Activated B cell treated with CpG ODN at 0.5 μM for 24 hours (primary cell): ENCODE measurements at regions of chr15 and their contacts with region 1.

Region 1: GRCh38 chr15:67134067-67134838 is 68.9 kb downstream of the SMAD3 start:
- DNase-seq: no peak
- ATAC-seq: peak; percentile 90
- H3K4me3 Mint-ChIP-seq: peak overlapping the region; percentile 78
- H3K27ac Mint-ChIP-seq: peak overlapping the region; percentile 94
- H3K4me1 Mint-ChIP-seq: peaks cover 94% of the 10 kb centered on the region
- H3K27me3 Mint-ChIP-seq: no peaks in the 10 kb centered on the region
- CTCF ChIP-seq: no peak

Region 2: DNA sequence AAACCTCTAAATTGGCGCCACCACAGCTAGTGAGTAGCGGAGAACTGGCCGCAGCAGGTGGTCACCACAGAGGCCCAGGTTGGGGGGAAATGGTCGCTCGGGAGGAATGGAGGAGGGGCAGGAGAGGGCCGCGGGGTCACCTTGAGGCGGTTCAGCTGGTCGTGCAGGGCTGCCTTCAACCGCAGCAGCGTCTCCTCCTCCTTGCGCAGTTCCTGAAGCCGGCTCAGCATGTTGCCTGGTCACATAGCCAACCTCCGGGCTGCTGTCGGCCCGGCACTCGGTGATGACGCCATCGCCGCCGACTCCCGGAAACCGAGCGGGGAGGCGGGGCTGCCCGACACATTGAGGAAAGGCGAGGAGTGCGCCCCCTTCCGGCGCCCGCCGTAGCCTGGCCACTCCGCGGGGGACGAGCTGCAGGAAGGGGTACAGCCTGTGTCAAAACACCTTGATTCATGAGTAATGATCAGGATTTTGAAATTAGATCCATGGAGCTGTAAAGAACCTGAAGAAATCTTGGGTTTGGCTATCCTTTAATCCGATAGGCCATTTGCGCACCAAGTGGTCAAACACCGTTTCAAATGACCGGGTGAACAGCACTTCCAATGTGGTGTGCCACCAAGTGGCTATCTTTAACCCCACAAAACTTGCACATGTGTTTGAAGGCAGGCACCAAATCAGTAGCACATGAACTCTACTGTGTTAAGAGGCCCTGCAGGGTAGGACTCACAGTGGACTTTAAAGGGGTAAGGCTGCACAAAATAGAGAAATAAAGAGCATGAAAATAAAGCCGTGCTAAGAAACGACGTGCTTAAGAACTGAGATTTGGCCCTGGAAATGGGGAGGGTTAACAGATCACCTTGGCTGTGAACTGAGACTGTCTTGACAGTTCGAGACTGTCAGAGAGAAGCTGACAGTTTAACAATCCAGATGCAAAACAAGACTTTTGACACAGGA is 636.5 kb before region 1 on chr15 and contains the start of gene SNAPC5:
- CTCF ChIA-PET with region 1: no interaction called
- POLR2A ChIA-PET with region 1: no interaction called
- intact Hi-C with region 1: no loop called
- DNase-seq: peak; percentile 97
- ATAC-seq: peak; percentile 94
- H3K4me3 Mint-ChIP-seq: peak within 1 kb of the TSS; percentile 94
- H3K27ac Mint-ChIP-seq: peak within 1 kb of the TSS; percentile 93
- H3K4me1 Mint-ChIP-seq: peaks cover 44% of the 10 kb centered on the region
- H3K27me3 Mint-ChIP-seq: no peaks in the 10 kb centered on the region
- CTCF ChIP-seq: peak; percentile 79
- total RNA-seq, gene SNAPC5: 28.5 and 30.6 TPM in 2 replicates

Region 3: GRCh38 chr15:66940368-66940767 is 193.9 kb before region 1 on chr15:
- CTCF ChIA-PET with region 1: no interaction called
- POLR2A ChIA-PET with region 1: no interaction called
- intact Hi-C with region 1: no loop called
- DNase-seq: no peak
- ATAC-seq: peak; percentile 57
- H3K4me3 Mint-ChIP-seq: no peak overlapping the region
- H3K27ac Mint-ChIP-seq: no peak overlapping the region
- H3K4me1 Mint-ChIP-seq: no peaks in the 10 kb centered on the region
- H3K27me3 Mint-ChIP-seq: no peaks in the 10 kb centered on the region
- CTCF ChIP-seq: no peak

Region 4: GRCh38 chr15:67085818-67086636 is 48.2 kb before region 1 on chr15:
- CTCF ChIA-PET with region 1: interaction called, 8 read pairs
- POLR2A ChIA-PET with region 1: interaction called, 7 read pairs
- intact Hi-C with region 1: loop called (anchors 1 kb)
- DNase-seq: no peak
- ATAC-seq: peak; percentile 51
- H3K4me3 Mint-ChIP-seq: peak overlapping the region; percentile 59
- H3K27ac Mint-ChIP-seq: peak overlapping the region; percentile 95
- H3K4me1 Mint-ChIP-seq: peaks cover 100% of the 10 kb centered on the region
- H3K27me3 Mint-ChIP-seq: no peaks in the 10 kb centered on the region
- CTCF ChIP-seq: no peak

Region 5: GRCh38 chr15:67091071-67091979 is 42.9 kb before region 1 on chr15:
- CTCF ChIA-PET with region 1: no interaction called
- POLR2A ChIA-PET with region 1: interaction called, 6 read pairs
- intact Hi-C with region 1: loop called (anchors 1 kb)
- DNase-seq: no peak
- ATAC-seq: peak; percentile 46
- H3K4me3 Mint-ChIP-seq: peak overlapping the region; percentile 74
- H3K27ac Mint-ChIP-seq: peak overlapping the region; percentile 95
- H3K4me1 Mint-ChIP-seq: peaks cover 100% of the 10 kb centered on the region
- H3K27me3 Mint-ChIP-seq: no peaks in the 10 kb centered on the region
- CTCF ChIP-seq: no peak

Region 6: GRCh38 chr15:67109141-67110034 is 24.9 kb before region 1 on chr15:
- CTCF ChIA-PET with region 1: no interaction called
- POLR2A ChIA-PET with region 1: interaction called, 10 read pairs
- intact Hi-C with region 1: no loop called
- DNase-seq: peak; percentile 76
- ATAC-seq: peak; percentile 83
- H3K4me3 Mint-ChIP-seq: peak overlapping the region; percentile 67
- H3K27ac Mint-ChIP-seq: peak overlapping the region; percentile 92
- H3K4me1 Mint-ChIP-seq: peaks cover 14% of the 10 kb centered on the region
- H3K27me3 Mint-ChIP-seq: no peaks in the 10 kb centered on the region
- CTCF ChIP-seq: no peak

Region 7: DNA sequence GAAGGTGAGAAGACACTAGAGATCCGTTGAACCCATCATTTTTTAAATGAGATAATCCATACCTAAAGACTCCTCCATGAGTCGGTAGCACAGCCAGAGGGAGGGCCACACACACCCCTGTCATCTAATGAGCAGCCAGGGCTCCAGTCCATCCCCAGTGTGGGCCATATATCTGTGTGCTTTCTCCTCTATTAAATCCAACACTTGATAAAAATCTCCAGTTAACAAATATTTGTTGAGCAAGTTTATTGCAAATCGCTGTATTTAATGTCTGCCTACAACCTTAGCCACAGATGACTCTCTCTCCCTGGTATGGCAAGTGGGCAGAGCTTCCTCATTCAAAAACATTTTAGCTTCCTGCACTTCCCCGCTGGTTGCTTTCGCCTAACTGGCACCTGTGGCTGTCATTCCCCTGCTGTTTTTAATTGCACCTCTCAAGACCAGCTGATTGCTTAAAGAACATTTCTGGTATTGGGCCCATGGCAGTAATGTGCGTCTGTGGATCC is 14.0 kb after region 1 on chr15:
- CTCF ChIA-PET with region 1: no interaction called
- POLR2A ChIA-PET with region 1: interaction called, 3 read pairs
- intact Hi-C with region 1: loop called (anchors 1 kb)
- DNase-seq: no peak
- ATAC-seq: peak; percentile 55
- H3K4me3 Mint-ChIP-seq: peak overlapping the region; percentile 12
- H3K27ac Mint-ChIP-seq: peak overlapping the region; percentile 57
- H3K4me1 Mint-ChIP-seq: peaks cover 91% of the 10 kb centered on the region
- H3K27me3 Mint-ChIP-seq: no peaks in the 10 kb centered on the region
- CTCF ChIP-seq: no peak